ENCODE measurements at regions of chr4 and their contacts with region 1.

Region 1: DNA sequence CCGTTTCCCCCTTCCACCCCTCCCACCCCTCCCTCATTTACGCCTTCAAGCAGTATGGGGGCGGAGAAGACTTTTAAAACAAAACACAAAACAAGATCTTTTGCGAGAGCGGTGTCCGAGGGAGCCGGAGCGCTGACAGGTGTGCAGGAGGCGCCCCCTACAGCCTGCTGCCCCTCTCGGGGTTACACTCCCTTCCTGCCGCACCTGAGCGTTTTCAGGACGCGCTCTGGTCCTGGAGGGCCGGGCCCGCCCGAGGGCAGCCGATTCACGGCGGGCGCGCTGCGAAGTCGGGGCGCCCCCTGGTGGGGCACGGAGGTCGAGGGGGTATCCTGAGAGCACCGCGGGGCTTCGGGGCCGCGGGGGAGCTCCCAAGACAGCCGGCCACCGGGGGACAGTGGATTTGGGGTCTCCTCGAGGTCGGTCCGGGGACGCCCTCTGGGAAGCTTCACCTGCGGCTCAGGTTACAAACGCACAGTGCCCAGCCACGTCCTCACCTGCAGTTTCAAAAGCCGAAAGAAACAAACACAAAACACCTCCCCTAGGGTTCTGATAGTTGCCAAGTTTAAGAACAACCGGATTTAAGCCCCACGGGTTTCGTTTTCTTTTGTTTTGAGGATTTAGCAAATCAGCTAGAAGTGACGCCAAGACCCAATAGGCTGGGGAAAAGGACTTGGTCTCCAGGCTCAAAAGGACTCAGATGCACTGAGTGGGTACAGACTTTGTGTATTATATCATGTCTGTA is 8.0 kb upstream of the NEUROG2 start:
- DNase-seq: peak; percentile 89
- ATAC-seq: peak; percentile 92
- H3K4me3 Mint-ChIP-seq: peak overlapping the region; percentile 72
- H3K27ac Mint-ChIP-seq: no peak overlapping the region
- H3K4me1 Mint-ChIP-seq: peaks cover 22% of the 10 kb centered on the region
- H3K27me3 Mint-ChIP-seq: peaks cover 47% of the 10 kb centered on the region

Region 2: GRCh38 chr4:110622841-110623717 is 1900.9 kb before region 1 on chr4 and contains the start of gene PITX2:
- CTCF ChIA-PET with region 1: no interaction called
- POLR2A ChIA-PET with region 1: no interaction called
- intact Hi-C with region 1: loop called (anchors 5 kb)
- DNase-seq: peak; percentile 85
- ATAC-seq: peak; percentile 98
- H3K4me3 Mint-ChIP-seq: peak within 1 kb of the TSS; percentile 57
- H3K27ac Mint-ChIP-seq: peak within 1 kb of the TSS; percentile 41
- H3K4me1 Mint-ChIP-seq: peaks cover 39% of the 10 kb centered on the region
- H3K27me3 Mint-ChIP-seq: peaks cover 91% of the 10 kb centered on the region
- total RNA-seq, gene PITX2: 0.09 TPM in 1 of 2 experiments, not detected in the other

Region 3: DNA sequence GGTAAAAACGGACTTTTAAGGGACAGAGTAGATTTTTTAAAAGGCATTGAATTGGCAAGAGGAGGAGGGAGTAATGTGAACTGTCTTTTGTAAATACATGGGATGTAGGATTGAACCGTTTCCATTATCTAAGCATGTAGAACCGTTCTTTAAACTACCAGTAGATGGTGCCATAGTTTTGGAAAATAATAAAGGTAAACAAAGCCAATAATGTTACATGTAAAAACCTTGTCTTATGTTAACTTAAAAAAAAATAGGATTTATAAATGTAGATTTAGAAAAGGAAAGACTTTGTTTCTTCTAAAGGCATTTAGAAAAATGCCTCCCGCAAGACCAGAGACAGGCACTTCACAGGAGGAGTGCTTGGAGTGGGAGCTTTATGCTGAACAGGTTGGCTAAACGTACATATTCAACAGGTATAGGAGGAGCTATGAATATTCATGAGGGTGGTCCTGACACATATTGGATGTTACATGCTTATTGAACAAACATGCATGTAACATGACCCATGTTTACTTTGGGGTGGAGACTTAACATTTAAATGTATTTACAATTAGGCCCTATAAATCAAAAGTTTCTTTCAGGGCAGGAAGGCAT is 424.1 kb before region 1 on chr4:
- CTCF ChIA-PET with region 1: interaction called, 6 read pairs
- POLR2A ChIA-PET with region 1: no interaction called
- intact Hi-C with region 1: loop called (anchors 1 kb)
- DNase-seq: no peak
- ATAC-seq: peak; percentile 80
- H3K4me3 Mint-ChIP-seq: no peak overlapping the region
- H3K27ac Mint-ChIP-seq: no peak overlapping the region
- H3K4me1 Mint-ChIP-seq: no peaks in the 10 kb centered on the region
- H3K27me3 Mint-ChIP-seq: peaks cover 12% of the 10 kb centered on the region

Region 4: GRCh38 chr4:112214390-112215264 is 309.3 kb before region 1 on chr4:
- CTCF ChIA-PET with region 1: interaction called, 4 read pairs
- POLR2A ChIA-PET with region 1: no interaction called
- intact Hi-C with region 1: loop called (anchors 1 to 5 kb)
- DNase-seq: no peak
- ATAC-seq: peak; percentile 61
- H3K4me3 Mint-ChIP-seq: no peak overlapping the region
- H3K27ac Mint-ChIP-seq: no peak overlapping the region
- H3K4me1 Mint-ChIP-seq: peaks cover 10% of the 10 kb centered on the region
- H3K27me3 Mint-ChIP-seq: no peaks in the 10 kb centered on the region

Region 5: GRCh38 chr4:112327965-112328733 is 195.8 kb before region 1 on chr4:
- CTCF ChIA-PET with region 1: interaction called, 34 read pairs
- POLR2A ChIA-PET with region 1: no interaction called
- intact Hi-C with region 1: loop called (anchors 1 kb)
- DNase-seq: peak; percentile 20
- ATAC-seq: peak; percentile 47
- H3K4me3 Mint-ChIP-seq: no peak overlapping the region
- H3K27ac Mint-ChIP-seq: no peak overlapping the region
- H3K4me1 Mint-ChIP-seq: peaks cover 4% of the 10 kb centered on the region
- H3K27me3 Mint-ChIP-seq: no peaks in the 10 kb centered on the region

Region 6: DNA sequence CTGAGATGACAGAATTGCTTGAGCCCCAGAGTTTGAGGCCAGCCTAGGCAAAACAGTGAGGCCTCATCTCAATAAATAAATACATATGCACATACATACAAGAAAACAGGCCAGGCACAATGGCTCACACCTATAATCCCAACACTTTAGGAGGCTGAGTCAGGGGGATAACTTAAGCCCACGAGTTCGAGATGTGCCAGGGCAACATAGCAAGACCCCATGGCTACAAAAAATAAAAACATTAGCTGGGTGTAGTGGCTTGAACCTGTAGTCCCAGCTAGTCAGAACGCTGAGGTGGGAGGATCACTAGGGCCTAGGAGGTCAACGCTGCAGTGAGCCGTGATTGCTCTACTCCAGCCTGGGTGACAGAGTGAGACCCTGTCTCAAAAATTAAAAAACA is 43.6 kb after region 1 on chr4:
- CTCF ChIA-PET with region 1: no interaction called
- POLR2A ChIA-PET with region 1: no interaction called
- intact Hi-C with region 1: no loop called
- DNase-seq: no peak
- ATAC-seq: no peak
- H3K4me3 Mint-ChIP-seq: no peak overlapping the region
- H3K27ac Mint-ChIP-seq: no peak overlapping the region
- H3K4me1 Mint-ChIP-seq: no peaks in the 10 kb centered on the region
- H3K27me3 Mint-ChIP-seq: no peaks in the 10 kb centered on the region

Region 7: DNA sequence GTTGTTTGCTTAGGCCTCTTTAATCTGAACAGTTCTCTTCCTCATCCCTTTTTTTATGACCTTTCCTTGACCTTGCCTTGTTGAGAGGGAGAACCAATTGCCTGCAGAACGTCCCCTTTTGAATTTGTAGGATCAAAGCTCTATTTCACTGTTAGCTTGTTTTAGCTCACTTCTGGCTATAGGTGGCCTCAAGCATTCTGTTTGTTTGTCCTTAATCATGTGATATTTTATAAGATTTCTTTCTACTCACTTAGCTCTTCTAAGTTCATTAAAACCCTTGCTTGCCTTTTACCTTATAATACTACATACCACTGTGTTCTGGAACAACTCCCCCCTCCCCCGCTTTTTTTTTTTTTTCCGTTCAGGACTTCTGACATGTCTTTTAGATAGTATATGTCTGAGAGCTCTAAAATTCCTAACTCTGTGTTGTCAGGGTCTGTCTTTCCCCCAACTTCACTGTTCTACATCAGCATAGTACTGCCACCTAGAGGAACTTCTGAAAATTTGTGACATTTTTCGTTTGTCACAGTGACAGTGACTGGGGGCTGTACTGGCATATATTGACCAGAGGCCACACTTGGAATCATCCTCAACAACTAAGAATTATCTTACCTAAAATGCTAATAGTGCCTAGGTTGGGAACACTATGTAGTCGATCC is 241.5 kb after region 1 on chr4:
- CTCF ChIA-PET with region 1: no interaction called
- POLR2A ChIA-PET with region 1: no interaction called
- intact Hi-C with region 1: loop called in 1 of 2 experiments (anchors 5 kb)
- DNase-seq: peak; percentile 11
- ATAC-seq: peak; percentile 60
- H3K4me3 Mint-ChIP-seq: no peak overlapping the region
- H3K27ac Mint-ChIP-seq: no peak overlapping the region
- H3K4me1 Mint-ChIP-seq: no peaks in the 10 kb centered on the region
- H3K27me3 Mint-ChIP-seq: peaks cover 4% of the 10 kb centered on the region

Measured in activated CD4-positive, alpha-beta T cell treated with anti-CD3 and anti-CD28 coated beads for 36 hours (primary cell).